ENCODE measurements at regions of chr7 and their contacts with region 1.

Region 1: DNA sequence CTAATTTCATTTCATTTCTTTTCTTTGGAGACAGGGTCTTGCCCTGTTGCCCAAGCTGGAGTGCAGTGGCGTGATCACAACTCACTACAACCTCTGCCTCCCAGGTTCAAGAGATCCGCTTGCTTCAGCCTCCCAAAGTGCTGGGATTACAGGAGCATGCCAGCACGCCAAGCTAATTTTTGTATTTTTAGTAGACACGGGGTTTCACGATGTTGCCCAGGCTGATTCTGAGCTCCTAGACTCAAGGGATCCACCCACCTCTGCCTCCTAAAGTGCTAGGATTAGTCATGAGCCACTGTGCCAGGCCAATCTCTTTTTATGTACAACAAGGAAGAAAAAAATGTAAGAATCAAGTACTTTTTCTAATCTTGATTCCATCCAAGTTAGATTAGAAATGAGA is 10.7 kb upstream of the KMT2E start:
- DNase-seq: peak in 6 of 14 experiments; percentile 18 to 63 (median 42)
- ATAC-seq: peak; percentile 81
- H3K4me3 ChIP-seq: no peak overlapping the region
- H3K4me3 Mint-ChIP-seq: peak overlapping the region; percentile 67
- H3K27ac ChIP-seq: peak overlapping the region; percentile 16 to 26
- H3K27ac Mint-ChIP-seq: peak overlapping the region; percentile 92
- H3K4me1 ChIP-seq: peaks cover 68% of the 10 kb centered on the region
- H3K4me1 Mint-ChIP-seq: peaks cover 94% of the 10 kb centered on the region
- H3K27me3 ChIP-seq: no peaks in the 10 kb centered on the region
- H3K27me3 Mint-ChIP-seq: no peaks in the 10 kb centered on the region
- CTCF ChIP-seq: no peak

Region 2: GRCh38 chr7:104971290-104972071 is 31.8 kb before region 1 on chr7:
- CTCF ChIA-PET with region 1: no interaction called
- POLR2A ChIA-PET with region 1: no interaction called
- intact Hi-C with region 1: no loop called
- DNase-seq: no peak
- ATAC-seq: no peak
- H3K4me3 ChIP-seq: no peak overlapping the region
- H3K4me3 Mint-ChIP-seq: no peak overlapping the region
- H3K27ac ChIP-seq: no peak overlapping the region
- H3K27ac Mint-ChIP-seq: no peak overlapping the region
- H3K4me1 ChIP-seq: no peaks in the 10 kb centered on the region
- H3K4me1 Mint-ChIP-seq: no peaks in the 10 kb centered on the region
- H3K27me3 ChIP-seq: no peaks in the 10 kb centered on the region
- H3K27me3 Mint-ChIP-seq: no peaks in the 10 kb centered on the region
- CTCF ChIP-seq: no peak

Region 3: DNA sequence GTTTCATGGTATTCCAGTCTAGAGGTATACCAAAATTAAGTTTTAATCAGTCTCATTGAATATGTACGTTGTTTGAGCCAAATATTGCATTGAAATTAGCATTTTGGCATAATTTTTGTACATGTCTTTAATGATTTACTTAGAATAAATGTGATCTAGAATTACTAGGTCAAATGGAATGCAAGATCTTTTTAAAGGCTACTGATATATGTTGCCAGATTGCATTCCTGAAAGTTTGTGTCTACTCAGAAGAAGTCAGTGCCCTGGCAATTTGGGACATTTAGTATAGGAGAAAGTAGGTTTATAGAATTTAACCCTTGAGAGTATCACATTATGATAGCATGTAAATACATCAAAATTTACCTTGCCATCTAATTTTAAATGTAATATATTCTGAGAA is 43.1 kb after region 1 on chr7:
- CTCF ChIA-PET with region 1: interaction called, 3 read pairs
- POLR2A ChIA-PET with region 1: no interaction called
- intact Hi-C with region 1: loop called in 1 of 2 experiments (anchors 5 kb)
- DNase-seq: no peak
- ATAC-seq: no peak
- H3K4me3 ChIP-seq: no peak overlapping the region
- H3K4me3 Mint-ChIP-seq: peak overlapping the region; percentile 20
- H3K27ac ChIP-seq: no peak overlapping the region
- H3K27ac Mint-ChIP-seq: no peak overlapping the region
- H3K4me1 ChIP-seq: peaks cover 20% of the 10 kb centered on the region
- H3K4me1 Mint-ChIP-seq: peaks cover 65% of the 10 kb centered on the region
- H3K27me3 ChIP-seq: no peaks in the 10 kb centered on the region
- H3K27me3 Mint-ChIP-seq: no peaks in the 10 kb centered on the region
- CTCF ChIP-seq: no peak